Lower lobe of right lung (tissue), 2 donors: ENCODE measurements at regions of chr1 and their contacts with region 1.

Region 1: DNA sequence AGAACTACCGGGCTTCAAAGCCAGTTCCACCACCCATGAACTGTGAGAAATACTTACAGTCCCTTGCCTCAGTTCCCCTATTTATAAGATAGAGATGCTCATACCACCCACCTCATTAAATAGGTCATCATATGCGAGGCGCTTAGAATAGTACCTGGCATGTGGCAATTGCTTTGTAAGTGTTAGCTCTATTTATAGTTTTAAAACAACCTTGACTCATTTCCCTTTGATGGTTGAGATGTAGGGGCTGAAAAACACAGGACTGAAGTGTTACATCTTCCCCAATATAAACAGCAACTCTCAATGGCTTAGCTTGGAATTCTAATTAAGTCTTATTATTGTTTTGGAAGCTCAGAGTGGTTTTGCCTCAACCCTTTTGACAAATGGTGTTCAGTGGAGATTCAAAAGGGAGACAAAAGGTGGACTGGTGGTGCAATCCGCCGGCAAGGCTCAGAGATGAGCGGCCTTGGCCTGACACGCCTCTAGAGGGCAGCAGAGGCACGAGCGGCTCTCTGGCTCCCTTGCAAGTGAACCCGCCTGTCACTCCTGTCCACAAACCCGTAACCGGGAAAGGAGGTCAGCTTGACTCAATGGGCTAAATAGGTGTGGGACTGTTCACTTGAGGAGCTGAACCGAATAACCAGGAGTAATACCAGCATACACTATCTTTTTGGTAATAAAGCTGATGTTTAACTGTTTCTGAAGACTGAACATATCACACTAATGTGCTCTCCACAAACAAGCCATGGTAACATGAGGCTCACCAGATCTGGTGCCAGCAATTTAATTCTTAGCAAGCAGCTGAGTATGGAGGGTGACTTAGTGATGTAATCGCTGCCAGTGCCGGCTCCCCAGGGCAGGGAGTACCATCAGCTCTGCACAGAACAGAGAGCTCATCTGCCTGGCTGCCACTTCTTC is 19.5 kb upstream of the SMYD2 start:
- DNase-seq: peak; percentile 86
- ATAC-seq: peak; percentile 96 to 98
- H3K4me3 ChIP-seq: no peak overlapping the region
- H3K27ac ChIP-seq: no peak overlapping the region
- H3K4me1 ChIP-seq: peaks cover 6% of the 10 kb centered on the region
- H3K27me3 ChIP-seq: peaks cover 46% of the 10 kb centered on the region
- CTCF ChIP-seq: peak; percentile 96

Region 2: GRCh38 chr1:214076708-214077065 is 184.8 kb before region 1 on chr1:
- intact Hi-C with region 1: no loop called
- DNase-seq: no peak
- ATAC-seq: no peak
- H3K4me3 ChIP-seq: no peak overlapping the region
- H3K27ac ChIP-seq: no peak overlapping the region
- H3K4me1 ChIP-seq: no peaks in the 10 kb centered on the region
- H3K27me3 ChIP-seq: peaks cover 6% of the 10 kb centered on the region
- CTCF ChIP-seq: no peak

Region 3: GRCh38 chr1:214328770-214329469 is 67.5 kb after region 1 on chr1:
- intact Hi-C with region 1: loop called (anchors 5 kb)
- DNase-seq: peak; percentile 74
- ATAC-seq: peak; percentile 90 to 91
- H3K4me3 ChIP-seq: no peak overlapping the region
- H3K27ac ChIP-seq: no peak overlapping the region
- H3K4me1 ChIP-seq: no peaks in the 10 kb centered on the region
- H3K27me3 ChIP-seq: no peaks in the 10 kb centered on the region
- CTCF ChIP-seq: peak; percentile 86